ENCODE measurements at regions of chr7 and their contacts with region 1.

Region 1: GRCh38 chr7:24812310-24812945 is 55.2 kb upstream of the GSDME start:
- DNase-seq: peak; percentile 61
- ATAC-seq: peak; percentile 73
- H3K4me3 Mint-ChIP-seq: no peak overlapping the region
- H3K27ac Mint-ChIP-seq: no peak overlapping the region
- H3K4me1 Mint-ChIP-seq: no peaks in the 10 kb centered on the region
- H3K27me3 Mint-ChIP-seq: no peaks in the 10 kb centered on the region

Region 2: DNA sequence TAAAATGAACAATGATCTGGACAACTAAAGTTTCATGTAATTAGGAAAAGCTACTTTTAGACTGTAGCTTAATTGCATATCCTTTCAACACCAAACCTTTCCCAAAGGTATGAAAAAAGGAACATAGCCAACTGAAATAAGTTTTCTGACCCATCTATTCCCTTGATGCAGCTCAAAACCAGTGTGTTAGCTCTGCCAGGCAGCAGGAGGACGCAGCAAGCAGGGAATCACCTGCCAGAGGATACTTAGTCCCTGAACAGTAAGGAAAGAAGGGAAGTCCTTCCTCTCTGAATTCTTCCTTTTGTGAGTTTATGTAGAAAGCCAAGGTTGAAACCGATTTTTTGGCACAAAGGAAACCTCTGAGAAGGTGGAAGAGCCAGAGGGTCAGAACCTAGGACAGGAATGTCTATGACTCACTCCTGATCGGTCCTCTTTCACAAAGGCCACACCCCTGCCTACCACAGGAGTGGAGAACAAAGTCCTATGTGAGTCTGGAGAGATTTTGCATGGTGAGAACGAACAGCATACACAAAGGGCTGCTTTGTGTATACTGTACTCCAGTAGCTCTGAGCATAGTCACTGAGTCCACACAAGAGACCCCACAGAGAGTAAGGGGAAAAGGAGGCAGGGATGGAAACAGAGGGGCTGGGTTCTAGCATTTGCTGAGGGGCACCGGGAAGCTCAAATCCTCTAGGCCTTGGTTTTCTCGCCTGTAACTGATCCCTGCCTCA is 13.7 kb after region 1 on chr7:
- CTCF ChIA-PET with region 1: interaction called, 42 read pairs
- POLR2A ChIA-PET with region 1: no interaction called
- DNase-seq: peak; percentile 30
- ATAC-seq: peak; percentile 35
- H3K4me3 Mint-ChIP-seq: peak overlapping the region; percentile 57
- H3K27ac Mint-ChIP-seq: peak overlapping the region; percentile 84
- H3K4me1 Mint-ChIP-seq: peaks cover 76% of the 10 kb centered on the region
- H3K27me3 Mint-ChIP-seq: no peaks in the 10 kb centered on the region

Region 3: GRCh38 chr7:24933298-24933697 is 120.9 kb after region 1 on chr7:
- CTCF ChIA-PET with region 1: no interaction called
- POLR2A ChIA-PET with region 1: no interaction called
- DNase-seq: no peak
- ATAC-seq: no peak
- H3K4me3 Mint-ChIP-seq: no peak overlapping the region
- H3K27ac Mint-ChIP-seq: no peak overlapping the region
- H3K4me1 Mint-ChIP-seq: peaks cover 40% of the 10 kb centered on the region
- H3K27me3 Mint-ChIP-seq: no peaks in the 10 kb centered on the region

Region 4: DNA sequence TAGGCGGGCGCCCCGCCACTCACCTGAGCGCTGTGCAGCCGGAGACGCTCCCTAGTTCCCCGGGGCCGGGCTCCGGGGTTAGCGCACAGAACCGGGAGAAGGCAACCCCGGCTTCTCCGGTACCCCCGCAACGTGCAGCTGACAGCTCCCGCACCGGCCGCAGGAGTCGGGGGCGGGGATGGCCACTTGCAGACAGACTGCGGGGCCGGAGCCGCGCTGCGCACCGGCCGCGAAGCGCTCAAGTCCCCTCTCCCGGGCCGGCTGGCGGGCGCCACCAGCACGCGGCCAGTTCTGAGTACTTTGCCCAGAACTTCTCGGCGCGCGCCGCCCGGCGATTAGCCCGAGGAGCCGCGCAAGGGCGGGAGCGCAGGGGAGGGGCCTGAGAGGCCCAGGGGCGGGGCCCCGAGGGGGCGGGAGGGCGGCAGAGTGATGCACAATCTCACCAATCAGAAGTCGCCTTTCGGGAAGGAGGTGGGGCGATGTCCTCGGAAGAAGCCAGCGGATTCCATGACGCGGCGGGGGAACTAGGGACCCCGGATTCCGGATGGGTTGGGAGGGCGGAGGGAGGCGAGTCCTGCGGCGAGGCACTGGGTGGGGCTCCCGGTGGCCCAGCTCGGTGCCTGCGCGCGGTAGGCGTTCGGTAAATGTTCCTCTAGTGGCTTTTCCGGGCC is 167.6 kb after region 1 on chr7 and contains the start of gene OSBPL3:
- CTCF ChIA-PET with region 1: interaction called, 35 read pairs
- POLR2A ChIA-PET with region 1: interaction called, 3 read pairs
- DNase-seq: peak; percentile 97
- ATAC-seq: peak; percentile 79
- H3K4me3 Mint-ChIP-seq: peak within 1 kb of the TSS; percentile 95
- H3K27ac Mint-ChIP-seq: peak within 1 kb of the TSS; percentile 97
- H3K4me1 Mint-ChIP-seq: peaks cover 69% of the 10 kb centered on the region
- H3K27me3 Mint-ChIP-seq: peaks cover 7% of the 10 kb centered on the region
- total RNA-seq, gene OSBPL3: 73.0 to 83.0 TPM

Region 5: DNA sequence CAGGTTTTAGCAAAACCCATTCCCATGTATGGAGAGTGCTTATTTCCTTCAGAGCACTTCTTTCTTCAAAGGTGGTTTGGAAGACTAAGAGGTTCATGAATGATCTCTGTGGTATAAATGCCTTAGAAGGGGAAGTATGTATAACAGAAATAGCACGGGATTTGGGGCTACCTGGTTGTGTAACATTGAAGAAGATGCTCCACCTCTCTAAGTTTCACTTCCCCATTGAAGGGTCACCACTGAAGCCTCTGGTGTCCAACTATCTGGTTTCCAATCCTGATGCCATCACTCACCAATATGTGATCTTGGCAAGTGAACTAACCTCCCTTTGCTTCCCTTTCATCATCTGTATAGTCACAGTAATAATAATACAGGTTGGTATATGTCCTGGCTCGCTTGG is 275.4 kb after region 1 on chr7:
- CTCF ChIA-PET with region 1: interaction called, 132 read pairs
- POLR2A ChIA-PET with region 1: no interaction called
- DNase-seq: no peak
- ATAC-seq: no peak
- H3K4me3 Mint-ChIP-seq: no peak overlapping the region
- H3K27ac Mint-ChIP-seq: no peak overlapping the region
- H3K4me1 Mint-ChIP-seq: no peaks in the 10 kb centered on the region
- H3K27me3 Mint-ChIP-seq: peaks cover 10% of the 10 kb centered on the region

Region 6: DNA sequence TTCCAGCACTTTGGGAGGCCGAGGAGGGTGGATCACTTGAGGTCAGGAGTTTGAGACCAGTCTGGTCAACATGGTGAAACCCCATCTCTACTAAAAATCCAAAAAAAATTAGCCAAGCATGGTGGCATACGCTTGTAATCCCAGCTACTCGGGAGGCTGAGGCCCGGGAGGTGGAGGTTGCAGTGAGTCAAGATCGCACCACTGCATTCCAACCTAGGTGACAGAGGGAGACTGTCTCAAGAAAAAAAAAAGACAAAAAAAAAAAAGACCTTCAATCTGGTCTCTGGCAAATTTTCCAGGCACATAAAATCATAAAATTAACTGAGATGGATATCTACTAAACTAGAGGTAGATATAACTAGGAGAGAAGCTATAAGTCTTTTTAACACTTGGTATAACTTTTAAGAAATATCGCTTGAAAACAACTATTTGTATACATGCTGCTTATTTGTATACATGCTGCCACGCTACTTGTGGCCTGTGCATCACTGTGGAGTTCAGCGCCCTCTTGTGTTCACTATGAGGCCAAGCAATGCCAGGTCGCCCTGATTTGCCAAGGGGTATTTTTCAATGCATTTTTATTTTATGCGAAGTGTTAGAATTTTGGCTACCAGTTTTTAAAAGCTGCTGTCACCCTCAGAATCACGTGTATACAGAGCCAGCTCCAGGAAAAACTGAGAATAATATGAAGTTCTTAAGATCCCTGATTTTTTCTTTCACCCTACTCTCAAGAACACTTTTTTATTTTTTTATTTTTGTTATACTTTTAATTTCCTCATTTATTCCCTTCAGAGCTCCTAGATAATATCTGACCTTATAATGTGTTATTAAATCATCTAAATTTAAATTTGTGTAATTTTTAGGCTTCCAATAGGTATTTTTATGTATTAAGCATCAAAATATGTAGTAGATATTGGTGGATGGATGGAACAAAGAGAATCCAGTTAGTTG is 285.9 kb after region 1 on chr7:
- CTCF ChIA-PET with region 1: interaction called, 132 read pairs
- POLR2A ChIA-PET with region 1: no interaction called
- DNase-seq: peak; percentile 74
- ATAC-seq: peak; percentile 83
- H3K4me3 Mint-ChIP-seq: no peak overlapping the region
- H3K27ac Mint-ChIP-seq: no peak overlapping the region
- H3K4me1 Mint-ChIP-seq: peaks cover 4% of the 10 kb centered on the region
- H3K27me3 Mint-ChIP-seq: peaks cover 11% of the 10 kb centered on the region

Measured in activated CD8-positive, alpha-beta T cell treated with anti-CD3 and anti-CD28 coated beads, Interleukin-2, amount 10 ng/mL, durations not matched to agents 7 days and 5 days (primary cell).